CD4-positive, alpha-beta memory T cell (primary cell): ENCODE measurements at regions of chr6 and their contacts with region 1.

Region 1: GRCh38 chr6:26097268-26097875 is 10.1 kb downstream of the HFE start:
- DNase-seq: peak; percentile 61 to 68 (median 66)
- H3K4me3 ChIP-seq: no peak overlapping the region
- H3K4me3 Mint-ChIP-seq: no peak overlapping the region
- H3K27ac ChIP-seq: no peak overlapping the region
- H3K27ac Mint-ChIP-seq: peak overlapping the region in 1 of 7 donors; percentile 43
- H3K4me1 ChIP-seq: no peaks in the 10 kb centered on the region
- H3K4me1 Mint-ChIP-seq: peaks cover 0 to 5% (median 5%) of the 10 kb centered on the region in 4 donors
- H3K27me3 ChIP-seq: no peaks in the 10 kb centered on the region
- H3K27me3 Mint-ChIP-seq: peaks cover 2% of the 10 kb centered on the region in 2 donors

Region 2: DNA sequence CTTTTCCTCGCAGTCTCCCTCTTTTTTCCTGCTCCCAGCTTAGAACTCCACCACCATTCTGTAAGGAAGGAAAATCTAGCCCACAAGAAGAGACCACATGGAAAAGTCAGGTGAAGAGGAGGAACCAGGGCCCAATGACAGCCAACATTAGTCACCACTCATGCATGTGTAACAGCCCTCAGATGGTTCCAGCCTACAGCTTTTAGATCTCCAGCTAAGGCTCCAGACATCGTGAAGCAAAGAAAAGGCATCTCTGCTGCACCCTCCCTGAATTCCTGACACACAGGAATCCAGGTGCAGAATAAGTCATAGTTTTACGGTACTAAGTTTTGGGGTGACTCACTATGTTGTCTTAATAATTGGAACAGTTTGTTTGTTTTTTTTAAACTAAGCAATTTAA is 1765.1 kb before region 1 on chr6:
- CTCF ChIA-PET with region 1: no interaction called
- POLR2A ChIA-PET with region 1: no interaction called
- intact Hi-C with region 1: no loop called
- DNase-seq: no peak
- H3K4me3 ChIP-seq: no peak overlapping the region
- H3K4me3 Mint-ChIP-seq: no peak overlapping the region
- H3K27ac ChIP-seq: no peak overlapping the region
- H3K27ac Mint-ChIP-seq: no peak overlapping the region
- H3K4me1 ChIP-seq: no peaks in the 10 kb centered on the region
- H3K4me1 Mint-ChIP-seq: no peaks in the 10 kb centered on the region
- H3K27me3 ChIP-seq: peaks cover 7% of the 10 kb centered on the region
- H3K27me3 Mint-ChIP-seq: peaks cover 6 to 14% of the 10 kb centered on the region in 2 donors

Region 3: GRCh38 chr6:26065952-26066380 is 31.4 kb before region 1 on chr6:
- CTCF ChIA-PET with region 1: interaction called, 533 read pairs
- POLR2A ChIA-PET with region 1: interaction called, 86 read pairs
- intact Hi-C with region 1: loop called (anchors 1 kb)
- DNase-seq: peak; percentile 70 to 76 (median 71)
- H3K4me3 ChIP-seq: no peak overlapping the region
- H3K4me3 Mint-ChIP-seq: no peak overlapping the region
- H3K27ac ChIP-seq: no peak overlapping the region
- H3K27ac Mint-ChIP-seq: peak overlapping the region in 1 of 7 donors; percentile 30
- H3K4me1 ChIP-seq: no peaks in the 10 kb centered on the region
- H3K4me1 Mint-ChIP-seq: peaks cover 4 to 12% (median 7%) of the 10 kb centered on the region in 4 donors
- H3K27me3 ChIP-seq: no peaks in the 10 kb centered on the region
- H3K27me3 Mint-ChIP-seq: peaks cover 0 to 4% of the 10 kb centered on the region in 2 donors

Region 4: GRCh38 chr6:26071135-26071534 is 26.2 kb before region 1 on chr6:
- CTCF ChIA-PET with region 1: interaction called, 533 read pairs
- POLR2A ChIA-PET with region 1: interaction called, 86 read pairs
- intact Hi-C with region 1: no loop called
- DNase-seq: no peak
- H3K4me3 ChIP-seq: no peak overlapping the region
- H3K4me3 Mint-ChIP-seq: no peak overlapping the region
- H3K27ac ChIP-seq: no peak overlapping the region
- H3K27ac Mint-ChIP-seq: no peak overlapping the region
- H3K4me1 ChIP-seq: no peaks in the 10 kb centered on the region
- H3K4me1 Mint-ChIP-seq: peaks cover 0 to under 1% (median under 1%) of the 10 kb centered on the region in 4 donors
- H3K27me3 ChIP-seq: no peaks in the 10 kb centered on the region
- H3K27me3 Mint-ChIP-seq: peaks cover 2 to 8% of the 10 kb centered on the region in 2 donors